Cardiac septum (tissue), 1 donor: ENCODE measurements at regions of chr5 and their contacts with region 1.

Region 1: GRCh38 chr5:138974227-138975063 is 99.3 kb upstream of the LRRTM2 start:
- DNase-seq: peak; percentile 79

Region 2: GRCh38 chr5:139131465-139131864 is 157.0 kb after region 1 on chr5:
- intact Hi-C with region 1: loop called (anchors 5 kb)
- DNase-seq: no peak